T-cell (primary cell): ENCODE measurements at regions of chr5 and their contacts with region 1.

Region 1: DNA sequence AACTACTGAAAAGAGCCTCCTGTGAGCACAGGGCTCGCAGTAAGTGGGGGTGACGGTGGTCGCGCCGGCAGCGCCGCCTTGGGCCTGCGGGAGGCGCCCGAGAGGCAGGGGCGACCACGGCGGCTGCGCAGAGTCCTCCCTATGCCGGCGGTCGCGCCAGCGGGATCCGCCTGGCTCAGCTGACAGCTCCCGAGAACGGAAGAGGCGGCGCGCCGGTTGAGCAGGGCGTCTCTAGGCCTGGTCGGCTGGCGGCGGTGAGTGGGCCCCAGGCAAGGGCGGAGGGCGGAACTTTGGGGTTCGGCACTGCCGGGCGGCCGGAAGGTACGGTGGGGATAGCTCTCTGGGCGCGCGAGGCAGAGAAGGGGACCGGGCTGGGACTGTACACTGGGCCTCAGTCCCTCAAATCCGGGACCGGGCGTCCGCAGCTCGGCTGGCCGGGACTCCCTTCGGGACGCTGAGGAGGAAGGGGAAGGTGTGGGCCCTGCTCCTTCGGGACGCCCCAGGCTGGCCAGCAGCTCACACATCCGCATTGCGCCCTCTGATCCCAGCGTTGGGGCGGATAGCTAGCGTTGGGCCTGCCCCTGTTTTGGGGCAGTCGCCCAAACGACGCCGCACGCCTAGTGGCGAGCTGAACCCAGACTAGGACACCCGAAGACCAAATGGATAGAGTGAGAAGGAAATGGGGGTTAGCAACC is at the start of gene RNF14:
- DNase-seq: peak; percentile 86 to 95 (median 92)
- ATAC-seq: peak; percentile 96 to 98 (median 97)
- H3K4me3 ChIP-seq: peak within 1 kb of the TSS; percentile 92 to 96
- H3K4me3 Mint-ChIP-seq: peak within 1 kb of the TSS; percentile 90 to 96 (median 92)
- H3K27ac ChIP-seq: peak within 1 kb of the TSS; percentile 89
- H3K27ac Mint-ChIP-seq: peak within 1 kb of the TSS; percentile 94 to 96
- H3K4me1 ChIP-seq: peaks cover 17 to 19% of the 10 kb centered on the region in 2 experiments
- H3K4me1 Mint-ChIP-seq: peaks cover 32 to 43% (median 38%) of the 10 kb centered on the region in 3 donors
- H3K27me3 ChIP-seq: no peaks in the 10 kb centered on the region
- H3K27me3 Mint-ChIP-seq: no peaks in the 10 kb centered on the region
- total RNA-seq, gene RNF14: 16.4 to 35.8 (median 28.2) TPM

Region 2: DNA sequence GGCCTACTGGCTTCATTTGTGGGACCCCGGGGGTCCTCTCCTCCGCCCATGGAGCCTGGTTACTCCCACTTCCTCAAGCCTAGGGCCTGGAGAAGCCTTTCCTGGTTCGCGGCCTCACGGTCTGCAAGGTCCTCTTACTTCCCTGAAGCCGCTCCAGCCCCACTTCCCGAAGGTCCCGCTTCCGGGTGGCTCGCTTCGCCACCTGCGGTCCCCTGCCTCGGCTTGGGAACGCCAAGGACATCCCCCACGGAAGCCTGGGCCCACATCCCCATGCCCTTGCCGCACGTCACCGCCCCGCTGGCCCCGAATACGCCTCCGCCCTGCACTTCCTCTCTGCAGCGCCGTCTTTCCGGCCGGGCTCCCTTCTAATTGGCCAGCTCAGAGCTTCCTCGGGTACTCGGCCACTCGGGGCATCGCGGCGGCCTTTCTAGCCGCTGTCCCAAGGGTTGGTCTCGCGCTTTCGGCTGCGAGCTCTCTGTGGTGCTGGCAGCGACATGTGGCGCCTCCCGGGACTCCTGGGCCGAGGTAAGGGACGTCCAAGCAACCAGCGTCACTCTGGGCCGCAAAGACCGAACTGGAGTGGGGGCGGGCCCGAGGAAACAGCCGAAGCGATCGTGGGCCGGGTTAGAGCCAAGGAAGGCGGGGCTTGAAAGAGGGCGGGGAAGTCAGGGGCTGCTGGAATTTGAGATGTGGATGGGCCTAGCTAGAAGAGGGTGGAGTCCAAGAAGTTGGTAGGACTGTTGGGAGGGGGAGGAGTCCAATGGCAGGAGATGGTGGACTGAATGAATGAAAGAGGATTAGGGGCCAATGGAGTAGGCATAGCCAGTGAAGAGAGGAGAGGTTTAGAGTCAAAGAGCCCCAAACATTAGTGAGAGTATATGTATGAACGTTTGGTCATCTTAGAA is 45.4 kb before region 1 on chr5 and contains the start of gene DELE1:
- CTCF ChIA-PET with region 1: interaction called in 1 of 2 experiments, 11 read pairs
- POLR2A ChIA-PET with region 1: interaction called in 1 of 2 experiments, 6 read pairs
- DNase-seq: peak; percentile 83 to 93 (median 87)
- ATAC-seq: peak; percentile 96 to 98 (median 98)
- H3K4me3 ChIP-seq: peak within 1 kb of the TSS; percentile 73 to 76
- H3K4me3 Mint-ChIP-seq: peak within 1 kb of the TSS; percentile 89 to 93 (median 91)
- H3K27ac ChIP-seq: peak within 1 kb of the TSS; percentile 96
- H3K27ac Mint-ChIP-seq: peak within 1 kb of the TSS; percentile 93 to 94
- H3K4me1 ChIP-seq: peaks cover 5 to 24% of the 10 kb centered on the region in 2 experiments
- H3K4me1 Mint-ChIP-seq: peaks cover 35 to 43% (median 42%) of the 10 kb centered on the region in 3 donors
- H3K27me3 ChIP-seq: no peaks in the 10 kb centered on the region
- H3K27me3 Mint-ChIP-seq: no peaks in the 10 kb centered on the region
- total RNA-seq, gene DELE1: 80.3 to 130 (median 85.2) TPM

Region 3: GRCh38 chr5:141986072-141986471 is 17.0 kb after region 1 on chr5:
- CTCF ChIA-PET with region 1: interaction called, 15 to 21 read pairs
- POLR2A ChIA-PET with region 1: interaction called in 1 of 2 experiments, 5 read pairs
- DNase-seq: no peak
- ATAC-seq: no peak
- H3K4me3 ChIP-seq: no peak overlapping the region
- H3K4me3 Mint-ChIP-seq: no peak overlapping the region
- H3K27ac ChIP-seq: no peak overlapping the region
- H3K27ac Mint-ChIP-seq: peak overlapping the region in 1 of 2 donors; percentile 37
- H3K4me1 ChIP-seq: no peaks in the 10 kb centered on the region
- H3K4me1 Mint-ChIP-seq: no peaks in the 10 kb centered on the region
- H3K27me3 ChIP-seq: no peaks in the 10 kb centered on the region
- H3K27me3 Mint-ChIP-seq: no peaks in the 10 kb centered on the region

Region 4: GRCh38 chr5:142117579-142118151 is 148.6 kb after region 1 on chr5:
- CTCF ChIA-PET with region 1: interaction called in 1 of 2 experiments, 3 read pairs
- POLR2A ChIA-PET with region 1: interaction called, 4 to 10 read pairs
- DNase-seq: no peak
- ATAC-seq: peak in 1 of 4 experiments; percentile 29
- H3K4me3 ChIP-seq: no peak overlapping the region
- H3K4me3 Mint-ChIP-seq: peak overlapping the region in 2 of 3 donors; percentile 5 to 70
- H3K27ac ChIP-seq: no peak overlapping the region
- H3K27ac Mint-ChIP-seq: peak overlapping the region in 1 of 2 donors; percentile 68
- H3K4me1 ChIP-seq: peaks cover 34 to 45% of the 10 kb centered on the region in 2 experiments
- H3K4me1 Mint-ChIP-seq: peaks cover 88 to 94% (median 91%) of the 10 kb centered on the region in 3 donors
- H3K27me3 ChIP-seq: no peaks in the 10 kb centered on the region
- H3K27me3 Mint-ChIP-seq: no peaks in the 10 kb centered on the region

Region 5: DNA sequence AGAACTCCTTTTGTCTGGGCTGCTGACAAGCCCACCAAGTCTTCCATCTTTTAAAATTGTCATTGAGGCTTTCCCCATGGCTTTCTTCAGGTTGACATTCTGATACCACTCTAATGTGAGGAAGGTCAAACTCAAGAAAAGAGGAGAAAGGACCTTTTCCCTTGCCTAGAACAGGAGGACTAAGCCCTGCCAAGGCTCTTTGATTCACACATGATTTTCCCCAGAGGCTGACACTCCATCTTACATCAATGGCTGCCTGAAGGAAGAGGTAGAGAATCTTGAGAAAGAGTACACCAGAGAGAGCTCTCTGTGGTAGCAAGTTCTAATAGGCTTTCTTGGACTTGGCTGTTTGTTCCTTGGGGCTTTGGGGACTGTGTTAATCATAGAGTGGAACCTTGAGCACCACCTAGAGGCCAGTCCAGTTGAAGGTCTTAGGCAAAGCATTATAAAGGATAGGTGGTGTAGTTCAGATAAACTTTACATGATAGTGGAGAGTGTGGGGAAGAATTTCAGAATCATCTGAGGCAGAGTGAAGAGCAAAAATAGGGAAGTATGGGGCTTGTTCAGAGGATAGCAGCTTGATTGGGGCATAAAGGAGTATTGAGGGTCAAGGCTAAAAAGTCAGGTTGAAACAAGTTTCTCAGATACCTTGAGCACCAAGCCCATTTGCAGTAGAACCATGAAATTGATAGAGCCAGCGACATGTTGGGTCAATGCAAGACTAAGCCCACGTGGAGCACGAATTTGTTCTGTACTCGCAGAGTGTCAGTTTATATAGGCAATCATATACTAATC is 176.2 kb after region 1 on chr5:
- CTCF ChIA-PET with region 1: interaction called in 1 of 2 experiments, 12 read pairs
- POLR2A ChIA-PET with region 1: interaction called in 1 of 2 experiments, 18 read pairs
- DNase-seq: peak in 34 of 35 experiments; percentile 28 to 76 (median 52)
- ATAC-seq: peak; percentile 64 to 86 (median 80)
- H3K4me3 ChIP-seq: no peak overlapping the region
- H3K4me3 Mint-ChIP-seq: no peak overlapping the region
- H3K27ac ChIP-seq: no peak overlapping the region
- H3K27ac Mint-ChIP-seq: no peak overlapping the region
- H3K4me1 ChIP-seq: no peaks in the 10 kb centered on the region
- H3K4me1 Mint-ChIP-seq: peaks cover 0 to 16% (median 7%) of the 10 kb centered on the region in 3 donors
- H3K27me3 ChIP-seq: no peaks in the 10 kb centered on the region
- H3K27me3 Mint-ChIP-seq: no peaks in the 10 kb centered on the region